ENCODE measurements at regions of chr19 and their contacts with region 1.

Region 1: DNA sequence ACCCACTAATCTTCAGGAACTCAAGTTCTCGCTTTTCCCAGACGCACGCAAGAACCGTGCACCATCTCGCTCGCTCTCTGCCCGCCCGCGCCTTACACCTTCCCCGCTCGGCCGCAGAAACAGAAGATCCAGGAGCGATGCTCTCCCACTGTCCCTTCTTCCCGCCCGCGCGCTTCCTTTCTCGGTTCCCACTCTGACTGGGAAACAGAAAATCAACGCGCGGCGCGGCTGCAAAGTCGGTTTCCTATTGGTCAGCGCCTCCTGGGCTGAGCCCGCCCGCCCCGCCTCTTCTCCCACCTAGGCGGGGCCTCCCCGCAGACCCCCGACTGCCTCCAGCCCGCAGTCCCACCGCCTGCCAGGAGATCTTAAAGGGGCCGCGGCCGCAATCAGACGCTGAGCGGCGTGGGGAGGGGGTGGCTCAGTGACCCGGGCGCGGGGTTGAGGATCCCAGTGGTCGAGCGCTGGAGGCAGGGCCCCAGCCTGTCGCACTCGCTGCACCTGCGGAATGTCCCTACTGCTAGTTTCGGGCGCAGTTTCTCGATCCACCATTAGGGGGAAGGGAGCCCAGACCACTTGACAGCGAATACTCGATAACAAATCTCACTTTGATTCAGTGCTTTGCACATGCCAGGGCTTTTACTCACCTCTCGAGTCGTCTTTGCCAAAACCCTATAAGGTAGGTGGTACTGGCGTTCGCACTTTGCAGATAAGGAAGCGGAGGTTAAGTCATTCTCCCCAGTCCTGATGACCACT is 685 bp upstream of the SLC25A23 start:
- DNase-seq: peak; percentile 84 to 98
- H3K4me3 ChIP-seq: peak overlapping the region; percentile 72 to 79
- H3K27ac ChIP-seq: peak overlapping the region in 1 of 2 donors; percentile 59
- H3K4me1 ChIP-seq: peaks cover 0 to 4% of the 10 kb centered on the region in 2 donors
- H3K27me3 ChIP-seq: no peaks in the 10 kb centered on the region
- CTCF ChIP-seq: peak; percentile 59 to 73 (median 63)

Region 2: DNA sequence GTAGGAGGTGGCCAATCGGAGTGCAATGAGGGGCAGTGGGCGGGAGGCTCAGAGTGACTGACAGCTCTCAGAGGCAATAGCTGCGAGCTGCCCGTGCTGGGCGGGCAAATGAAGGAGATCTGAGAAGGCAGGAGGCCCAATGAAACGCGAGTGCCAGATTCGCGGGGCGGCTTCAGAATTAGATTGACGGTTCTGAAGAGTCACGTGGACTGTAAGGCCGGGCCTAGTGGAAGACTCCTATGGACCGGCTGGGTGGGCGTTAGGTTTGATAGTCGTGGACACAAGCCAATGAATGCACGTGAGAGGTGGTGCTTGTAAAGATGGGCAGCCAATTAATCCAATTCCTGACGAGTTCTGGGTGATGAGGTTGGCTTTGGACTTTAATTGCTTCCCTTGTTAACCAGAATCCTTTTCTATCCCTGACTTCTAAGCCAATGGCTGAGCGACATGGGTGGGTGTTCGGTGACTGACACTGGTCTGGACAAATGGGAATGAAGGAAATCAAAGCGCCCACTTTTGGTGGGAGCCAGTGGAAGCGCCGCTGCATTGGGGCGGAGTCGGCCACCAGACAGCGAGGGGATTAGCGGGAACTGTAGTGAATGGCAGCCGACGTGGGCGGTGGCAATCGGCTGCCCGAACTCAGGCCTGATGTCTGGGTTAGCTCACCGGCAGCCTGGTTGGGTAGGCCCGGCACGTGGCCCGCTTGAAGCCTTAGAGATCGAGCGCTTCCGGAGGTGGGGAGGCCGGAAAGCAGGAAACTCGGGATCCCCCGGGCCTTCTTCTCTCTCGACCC is 35.1 kb before region 1 on chr19:
- intact Hi-C with region 1: loop called (anchors 1 kb)
- DNase-seq: peak; percentile 100
- H3K4me3 ChIP-seq: peak overlapping the region; percentile 21 to 48
- H3K27ac ChIP-seq: peak overlapping the region; percentile 83 to 87
- H3K4me1 ChIP-seq: peaks cover 13 to 21% of the 10 kb centered on the region in 2 donors
- H3K27me3 ChIP-seq: no peaks in the 10 kb centered on the region
- CTCF ChIP-seq: peak in 1 of 3 experiments; percentile 17

Region 3: DNA sequence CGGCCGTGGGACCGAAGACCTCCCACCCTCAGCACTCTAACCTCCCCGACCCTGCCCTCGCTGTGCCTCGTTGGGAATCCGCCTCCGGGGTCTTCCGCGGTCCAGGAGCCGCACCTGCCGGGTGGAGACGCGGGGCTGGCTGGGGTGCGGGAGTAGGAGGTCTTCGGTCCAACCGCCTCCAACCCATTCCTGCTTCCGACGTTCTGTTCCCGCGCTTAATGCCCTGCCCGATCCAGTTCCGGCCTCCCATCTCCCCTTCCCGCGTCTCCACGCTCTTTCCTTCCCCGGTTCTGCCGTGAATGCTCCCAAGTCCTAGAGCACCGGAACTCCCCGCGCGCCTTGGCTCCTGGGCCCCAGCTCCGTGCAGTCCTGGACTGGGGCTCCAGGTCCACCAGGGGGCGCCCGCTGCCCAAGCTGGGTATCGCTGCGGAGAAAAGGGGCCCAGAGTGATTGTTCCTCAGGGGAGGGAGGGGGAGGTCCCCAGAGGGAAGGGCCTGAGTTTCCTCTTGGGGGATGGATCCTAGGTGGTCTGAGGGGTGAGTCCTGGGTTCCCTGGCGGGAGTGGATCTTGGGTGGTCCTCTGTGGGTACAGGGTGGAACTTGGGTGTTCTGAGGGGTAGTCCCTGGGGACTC is 56.5 kb after region 1 on chr19:
- intact Hi-C with region 1: no loop called
- DNase-seq: peak; percentile 31 to 90
- H3K4me3 ChIP-seq: peak overlapping the region; percentile 46 to 73
- H3K27ac ChIP-seq: peak overlapping the region in 1 of 2 donors; percentile 53
- H3K4me1 ChIP-seq: peaks cover 0 to 4% of the 10 kb centered on the region in 2 donors
- H3K27me3 ChIP-seq: no peaks in the 10 kb centered on the region
- CTCF ChIP-seq: peak; percentile 85 to 98 (median 91)

Measured in ascending aorta (tissue), 2 donors.